AG04450 (cell line): ENCODE measurements at regions of chr3 and their contacts with region 1.

Region 1: DNA sequence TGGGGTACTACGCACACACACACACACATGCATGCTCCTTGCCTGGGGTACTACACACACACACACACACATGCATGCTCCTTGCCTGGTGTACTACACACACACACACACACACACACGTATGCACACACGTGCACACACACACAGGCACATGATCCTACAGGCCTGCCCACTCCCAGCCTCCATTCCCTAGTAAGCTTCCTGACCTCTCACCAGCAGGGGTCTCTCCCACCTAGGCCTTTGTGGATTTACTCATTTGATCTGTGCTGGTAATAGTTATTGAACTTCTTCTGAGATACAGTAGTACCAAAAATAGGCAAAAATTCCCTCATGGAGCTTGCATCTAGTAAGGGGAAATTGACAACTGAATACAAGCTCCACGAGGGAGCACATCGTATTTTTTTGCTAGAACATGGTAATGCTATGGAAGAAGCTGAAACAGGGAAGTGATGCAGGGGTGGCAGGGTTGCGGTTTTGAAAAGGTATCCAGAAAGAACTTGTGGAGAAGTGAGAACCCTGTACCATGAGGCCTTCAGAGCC is 19.1 kb downstream of the TTC21A start:
- DNase-seq: no peak
- H3K4me3 ChIP-seq: no peak overlapping the region
- H3K27ac ChIP-seq: no peak overlapping the region
- H3K27me3 ChIP-seq: no peaks in the 10 kb centered on the region
- CTCF ChIP-seq: peak; percentile 80

Region 2: DNA sequence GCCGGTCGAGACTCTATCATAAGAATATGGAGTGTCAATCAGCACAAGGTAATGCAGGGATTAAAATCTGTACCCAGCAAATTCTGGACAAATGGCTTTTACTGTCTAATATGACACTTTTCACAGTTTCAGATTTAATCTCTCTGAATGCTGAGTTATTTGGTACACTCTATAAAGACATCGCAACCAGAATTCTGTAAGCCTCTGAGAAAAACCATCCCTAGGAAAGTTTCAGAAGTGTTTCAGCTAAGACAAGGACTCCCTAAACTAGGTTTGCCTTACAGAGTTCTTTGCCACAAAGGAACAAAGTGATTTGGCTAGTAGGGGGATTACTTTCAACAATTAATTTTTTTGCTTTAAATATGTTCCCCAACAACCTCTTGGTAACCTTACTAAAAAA is 63.5 kb before region 1 on chr3:
- CTCF ChIA-PET with region 1: no interaction called
- POLR2A ChIA-PET with region 1: no interaction called
- DNase-seq: no peak
- H3K4me3 ChIP-seq: no peak overlapping the region
- H3K27ac ChIP-seq: no peak overlapping the region
- H3K27me3 ChIP-seq: no peaks in the 10 kb centered on the region
- CTCF ChIP-seq: no peak

Region 3: GRCh38 chr3:39115870-39116269 is 10.7 kb before region 1 on chr3:
- CTCF ChIA-PET with region 1: interaction called, 17 read pairs
- POLR2A ChIA-PET with region 1: no interaction called
- DNase-seq: no peak
- H3K4me3 ChIP-seq: no peak overlapping the region
- H3K27ac ChIP-seq: no peak overlapping the region
- H3K27me3 ChIP-seq: no peaks in the 10 kb centered on the region
- CTCF ChIP-seq: no peak

Region 4: GRCh38 chr3:39189959-39190269 is 63.3 kb after region 1 on chr3:
- CTCF ChIA-PET with region 1: interaction called, 45 read pairs
- POLR2A ChIA-PET with region 1: no interaction called
- DNase-seq: no peak
- H3K4me3 ChIP-seq: no peak overlapping the region
- H3K27ac ChIP-seq: no peak overlapping the region
- H3K27me3 ChIP-seq: no peaks in the 10 kb centered on the region
- CTCF ChIP-seq: peak; percentile 82

Region 5: GRCh38 chr3:39196671-39197356 is 70.2 kb after region 1 on chr3:
- CTCF ChIA-PET with region 1: interaction called, 45 read pairs
- POLR2A ChIA-PET with region 1: no interaction called
- DNase-seq: no peak
- H3K4me3 ChIP-seq: no peak overlapping the region
- H3K27ac ChIP-seq: no peak overlapping the region
- H3K27me3 ChIP-seq: peaks cover 12% of the 10 kb centered on the region
- CTCF ChIP-seq: no peak

Region 6: GRCh38 chr3:39272191-39272590 is 145.6 kb after region 1 on chr3:
- CTCF ChIA-PET with region 1: interaction called, 10 read pairs
- POLR2A ChIA-PET with region 1: no interaction called
- DNase-seq: no peak
- H3K4me3 ChIP-seq: no peak overlapping the region
- H3K27ac ChIP-seq: no peak overlapping the region
- H3K27me3 ChIP-seq: peaks cover 10% of the 10 kb centered on the region
- CTCF ChIP-seq: no peak

Region 7: GRCh38 chr3:39279745-39280517 is 153.3 kb after region 1 on chr3 and contains the start of gene CX3CR1:
- CTCF ChIA-PET with region 1: interaction called, 446 read pairs
- POLR2A ChIA-PET with region 1: no interaction called
- DNase-seq: no peak
- H3K4me3 ChIP-seq: no peak within 1 kb of the TSS
- H3K27ac ChIP-seq: no peak within 1 kb of the TSS
- H3K27me3 ChIP-seq: peaks cover 8% of the 10 kb centered on the region
- CTCF ChIP-seq: no peak
- polyA plus RNA-seq, gene CX3CR1: not detected in 2 replicates

Region 8: GRCh38 chr3:39295184-39295775 is 168.7 kb after region 1 on chr3:
- CTCF ChIA-PET with region 1: interaction called, 446 read pairs
- POLR2A ChIA-PET with region 1: no interaction called
- DNase-seq: no peak
- H3K4me3 ChIP-seq: no peak overlapping the region
- H3K27ac ChIP-seq: no peak overlapping the region
- H3K27me3 ChIP-seq: no peaks in the 10 kb centered on the region
- CTCF ChIP-seq: no peak